ENCODE measurements at regions of chr2 and their contacts with region 1.

Region 1: GRCh38 chr2:128090945-128091725 is at the start of gene UGGT1:
- DNase-seq: peak; percentile 83 to 96
- H3K4me3 ChIP-seq: peak within 1 kb of the TSS; percentile 82
- H3K4me1 ChIP-seq: no peaks in the 10 kb centered on the region; the same call in 1 of the 2 replicates
- H3K27me3 ChIP-seq: no peaks in the 10 kb centered on the region

Region 2: GRCh38 chr2:126359494-126359893 is 1731.6 kb before region 1 on chr2:
- in situ Hi-C with region 1: no loop called
- DNase-seq: peak; percentile 9 to 10
- H3K4me3 ChIP-seq: no peak overlapping the region
- H3K4me1 ChIP-seq: no peaks in the 10 kb centered on the region
- H3K27me3 ChIP-seq: no peaks in the 10 kb centered on the region

Region 3: GRCh38 chr2:128027801-128028667 is 63.1 kb before region 1 on chr2 and contains the start of gene SAP130:
- in situ Hi-C with region 1: loop called (anchors 5 kb)
- DNase-seq: peak; percentile 96 to 99
- H3K4me3 ChIP-seq: peak within 1 kb of the TSS; percentile 76
- H3K4me1 ChIP-seq: 0 out of 2 replicates have a peak, but pooled peaks cover 2% of the 10 kb centered on the region
- H3K27me3 ChIP-seq: no peaks in the 10 kb centered on the region